A673 (cell line): ENCODE measurements at regions of chr17 and their contacts with region 1.

Region 1: GRCh38 chr17:10183931-10184930 is 14.2 kb downstream of the GAS7 start:
- DNase-seq: no peak
- H3K4me3 ChIP-seq: no peak overlapping the region
- H3K27ac ChIP-seq: no peak overlapping the region
- H3K4me1 ChIP-seq: no peaks in the 10 kb centered on the region
- H3K27me3 ChIP-seq: no peaks in the 10 kb centered on the region
- CTCF ChIP-seq: no peak

Region 2: GRCh38 chr17:10271106-10271562 is 86.9 kb after region 1 on chr17:
- CTCF ChIA-PET with region 1: no interaction called
- POLR2A ChIA-PET with region 1: interaction called, 12 read pairs
- intact Hi-C with region 1: no loop called
- DNase-seq: no peak
- H3K4me3 ChIP-seq: no peak overlapping the region
- H3K27ac ChIP-seq: no peak overlapping the region
- H3K4me1 ChIP-seq: no peaks in the 10 kb centered on the region
- H3K27me3 ChIP-seq: no peaks in the 10 kb centered on the region
- CTCF ChIP-seq: no peak